ENCODE measurements at regions of chr12 and their contacts with region 1.

Region 1: GRCh38 chr12:4763549-4763948 is 43.3 kb downstream of the GALNT8 start:
- DNase-seq: no peak

Region 2: GRCh38 chr12:4604684-4605193 is 158.8 kb before region 1 on chr12:
- intact Hi-C with region 1: loop called (anchors 5 kb)
- DNase-seq: peak; percentile 89

Measured in cardiac septum (tissue), 1 donor.